Ascending aorta (tissue), 2 donors: ENCODE measurements at regions of chr14 and their contacts with region 1.

Region 1: GRCh38 chr14:89855961-89856656 is 98.4 kb downstream of the EFCAB11 start:
- DNase-seq: no peak
- H3K4me3 ChIP-seq: no peak overlapping the region
- H3K27ac ChIP-seq: peak overlapping the region in 1 of 2 donors; percentile 30
- H3K4me1 ChIP-seq: peaks cover 0 to 10% of the 10 kb centered on the region in 2 donors
- H3K27me3 ChIP-seq: no peaks in the 10 kb centered on the region
- CTCF ChIP-seq: no peak

Region 2: DNA sequence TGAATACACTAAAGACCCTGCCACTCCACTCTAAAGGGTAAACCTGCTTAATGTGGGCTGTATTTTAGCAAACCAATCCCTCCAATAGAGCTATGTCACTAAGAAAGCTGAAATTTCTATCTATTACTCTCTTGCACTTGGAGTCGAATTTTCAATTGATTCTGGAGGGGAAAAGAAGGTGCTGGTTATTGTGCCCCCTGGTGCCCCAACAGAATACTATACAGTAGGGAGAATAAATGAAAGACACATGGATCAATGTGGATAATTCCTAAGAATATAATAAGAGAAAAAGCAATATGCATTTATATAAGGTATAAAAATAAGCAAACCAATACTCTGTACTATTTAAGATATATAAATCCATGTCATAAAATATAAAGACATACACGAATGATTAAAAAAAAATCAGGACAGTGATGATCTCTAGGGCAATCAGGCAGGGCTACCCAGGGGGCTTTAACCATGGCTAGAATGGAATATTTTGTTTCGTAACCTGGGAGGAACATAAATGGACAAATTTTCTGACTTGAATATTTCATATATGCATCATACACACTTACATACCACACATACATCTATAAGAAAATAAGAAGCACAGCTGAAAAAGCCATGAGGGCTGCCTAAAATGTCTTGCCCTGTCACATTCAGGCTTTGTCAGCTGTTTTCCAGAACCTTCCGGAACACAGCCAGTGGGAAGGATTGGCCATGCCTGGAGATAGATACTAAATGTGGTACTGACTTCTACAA is 44.0 kb after region 1 on chr14:
- intact Hi-C with region 1: loop called (anchors 5 kb)
- DNase-seq: no peak
- H3K4me3 ChIP-seq: no peak overlapping the region
- H3K27ac ChIP-seq: no peak overlapping the region
- H3K4me1 ChIP-seq: no peaks in the 10 kb centered on the region
- H3K27me3 ChIP-seq: no peaks in the 10 kb centered on the region
- CTCF ChIP-seq: peak; percentile 12 to 42 (median 37)